ENCODE measurements at regions of chr7 and their contacts with region 1.

Region 1: DNA sequence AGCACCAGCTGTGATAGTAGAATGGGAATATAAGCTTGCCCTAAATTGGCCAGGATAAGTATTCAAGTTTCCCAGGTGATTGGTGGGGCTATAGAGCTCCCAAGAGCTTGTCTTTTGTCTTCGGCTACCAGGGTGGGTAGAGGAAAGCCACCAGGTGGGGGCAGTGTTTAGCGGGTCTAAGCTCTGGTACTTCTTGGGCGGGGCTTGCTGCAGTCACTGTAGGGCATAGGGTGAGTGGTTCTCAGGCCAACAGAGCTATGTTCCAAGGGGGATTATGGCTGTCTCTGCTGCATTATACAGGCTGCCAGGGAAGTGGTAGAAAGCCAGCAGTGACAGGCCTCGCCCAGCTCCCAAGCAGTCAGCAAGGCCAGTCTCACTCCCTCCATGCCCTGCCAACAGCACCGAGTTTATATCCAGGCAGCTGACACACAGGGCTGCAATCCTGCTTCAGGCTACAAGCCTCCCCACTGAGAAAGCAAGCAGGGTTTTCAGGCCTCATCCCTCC is 110.7 kb downstream of the ZNF467 start:
- DNase-seq: peak; percentile 77
- ATAC-seq: peak; percentile 96
- H3K4me3 ChIP-seq: no peak overlapping the region
- H3K27ac ChIP-seq: no peak overlapping the region
- H3K4me1 ChIP-seq: 0 out of 2 replicates have a peak, but pooled peaks cover 4% of the 10 kb centered on the region
- H3K27me3 ChIP-seq: no peaks in the 10 kb centered on the region
- CTCF ChIP-seq: peak; percentile 75

Region 2: GRCh38 chr7:149714050-149714909 is 51.6 kb after region 1 on chr7:
- CTCF ChIA-PET with region 1: interaction called, 14 read pairs
- POLR2A ChIA-PET with region 1: no interaction called
- intact Hi-C with region 1: no loop called
- DNase-seq: peak; percentile 90
- ATAC-seq: peak; percentile 91
- H3K4me3 ChIP-seq: peak overlapping the region; percentile 85
- H3K27ac ChIP-seq: no peak overlapping the region
- H3K4me1 ChIP-seq: peaks cover 9% of the 10 kb centered on the region
- H3K27me3 ChIP-seq: no peaks in the 10 kb centered on the region
- CTCF ChIP-seq: no peak

Region 3: DNA sequence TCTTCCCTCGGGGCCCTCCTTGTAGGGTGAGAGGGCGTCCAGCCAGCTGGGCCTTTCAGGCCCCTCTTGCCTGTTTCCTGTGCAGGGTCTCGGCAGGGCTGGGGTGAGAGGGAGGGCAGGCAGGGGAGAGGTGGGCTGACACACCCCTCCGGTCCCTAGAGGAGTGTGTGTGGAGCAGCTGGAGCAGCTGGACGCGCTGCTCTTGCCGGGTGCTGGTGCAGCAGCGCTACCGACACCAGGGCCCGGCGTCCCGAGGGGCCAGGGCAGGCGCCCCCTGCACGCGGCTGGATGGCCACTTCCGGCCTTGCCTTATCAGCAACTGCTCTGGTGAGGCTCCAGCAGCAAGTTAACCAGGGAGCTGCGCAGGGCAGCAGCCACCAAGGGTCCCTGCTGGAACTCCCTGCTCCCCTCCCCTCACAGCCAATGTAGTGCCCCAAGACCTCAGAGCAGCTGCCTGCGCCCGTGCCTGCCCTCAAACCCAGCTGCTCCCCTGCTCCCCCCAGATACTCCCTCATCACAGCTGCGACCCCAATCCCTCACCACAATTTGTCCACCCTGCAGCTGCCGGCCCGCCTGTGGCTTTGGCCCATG is 159.8 kb after region 1 on chr7:
- CTCF ChIA-PET with region 1: no interaction called
- POLR2A ChIA-PET with region 1: no interaction called
- intact Hi-C with region 1: no loop called
- DNase-seq: no peak
- ATAC-seq: no peak
- H3K4me3 ChIP-seq: no peak overlapping the region
- H3K27ac ChIP-seq: no peak overlapping the region
- H3K4me1 ChIP-seq: no peaks in the 10 kb centered on the region
- H3K27me3 ChIP-seq: no peaks in the 10 kb centered on the region
- CTCF ChIP-seq: no peak

Region 4: GRCh38 chr7:151028131-151028947 is 1365.7 kb after region 1 on chr7 and contains the start of gene ABCB8:
- CTCF ChIA-PET with region 1: interaction called, 10 read pairs
- POLR2A ChIA-PET with region 1: no interaction called
- intact Hi-C with region 1: no loop called
- DNase-seq: peak; percentile 99
- ATAC-seq: peak; percentile 87
- H3K4me3 ChIP-seq: peak within 1 kb of the TSS; percentile 75
- H3K27ac ChIP-seq: peak within 1 kb of the TSS; percentile 81
- H3K4me1 ChIP-seq: peaks cover 44% of the 10 kb centered on the region
- H3K27me3 ChIP-seq: no peaks in the 10 kb centered on the region
- CTCF ChIP-seq: peak; percentile 60
- total RNA-seq, gene ABCB8: 58.4 and 95.7 TPM in 2 replicates

Measured in PC-3 (cell line).